Ascending aorta (tissue), 2 donors: ENCODE measurements at regions of chr10 and their contacts with region 1.

Region 1: GRCh38 chr10:29590915-29591650 is 43.7 kb downstream of the SVIL start:
- DNase-seq: no peak
- H3K4me3 ChIP-seq: no peak overlapping the region
- H3K27ac ChIP-seq: peak overlapping the region; percentile 24 to 74
- H3K4me1 ChIP-seq: peaks cover 9 to 49% of the 10 kb centered on the region in 2 donors
- H3K27me3 ChIP-seq: no peaks in the 10 kb centered on the region
- CTCF ChIP-seq: no peak

Region 2: DNA sequence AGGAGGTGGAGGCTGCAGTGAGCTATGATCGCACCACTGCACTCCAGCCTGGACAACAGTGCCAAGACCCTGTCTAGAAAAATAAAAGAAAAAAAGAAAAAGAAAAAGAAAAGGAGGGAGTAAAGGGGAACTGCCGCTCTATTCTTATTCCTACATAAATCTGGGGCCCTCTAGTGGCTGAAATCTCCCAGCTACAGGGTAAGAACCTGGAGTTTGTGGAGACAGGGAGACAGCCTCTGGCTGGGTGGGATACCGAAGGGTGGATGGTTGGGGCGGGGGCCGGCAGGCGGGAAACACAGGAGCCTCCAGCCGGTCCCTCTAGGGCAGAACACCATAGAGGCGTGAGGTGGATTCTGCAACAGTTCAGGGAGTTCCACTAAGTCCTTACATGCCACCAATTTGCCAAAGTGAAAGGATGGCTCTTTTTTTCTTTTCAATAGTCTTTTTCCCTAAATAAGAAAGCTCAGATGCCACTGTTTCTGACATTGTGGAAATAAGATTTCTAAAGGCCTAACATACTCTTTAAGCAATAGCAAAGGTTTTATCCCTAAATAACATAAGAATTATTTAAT is 73.6 kb before region 1 on chr10:
- intact Hi-C with region 1: loop called (anchors 5 kb)
- DNase-seq: no peak
- H3K4me3 ChIP-seq: no peak overlapping the region
- H3K27ac ChIP-seq: peak overlapping the region; percentile 66 to 72
- H3K4me1 ChIP-seq: peaks cover 0 to 20% of the 10 kb centered on the region in 2 donors
- H3K27me3 ChIP-seq: no peaks in the 10 kb centered on the region
- CTCF ChIP-seq: peak in 2 of 3 experiments; percentile 47 to 54

Region 3: GRCh38 chr10:29535012-29535777 is 55.9 kb before region 1 on chr10:
- intact Hi-C with region 1: loop called (anchors 5 kb)
- DNase-seq: no peak
- H3K4me3 ChIP-seq: peak overlapping the region; percentile 3 to 32
- H3K27ac ChIP-seq: peak overlapping the region; percentile 71 to 73
- H3K4me1 ChIP-seq: peaks cover 3 to 42% of the 10 kb centered on the region in 2 donors
- H3K27me3 ChIP-seq: no peaks in the 10 kb centered on the region
- CTCF ChIP-seq: peak; percentile 38 to 73 (median 66)

Region 4: GRCh38 chr10:29555746-29556481 is 35.2 kb before region 1 on chr10:
- intact Hi-C with region 1: loop called (anchors 2 kb)
- DNase-seq: peak in 1 of 2 donors; percentile 75
- H3K4me3 ChIP-seq: no peak overlapping the region
- H3K27ac ChIP-seq: peak overlapping the region; percentile 69 to 75
- H3K4me1 ChIP-seq: peaks cover 8 to 29% of the 10 kb centered on the region in 2 donors
- H3K27me3 ChIP-seq: no peaks in the 10 kb centered on the region
- CTCF ChIP-seq: no peak

Region 5: GRCh38 chr10:29621161-29621560 is 30.1 kb after region 1 on chr10:
- intact Hi-C with region 1: loop called (anchors 2 kb)
- DNase-seq: peak; percentile 32 to 87
- H3K4me3 ChIP-seq: peak overlapping the region in 1 of 2 donors; percentile 7
- H3K27ac ChIP-seq: peak overlapping the region; percentile 65 to 79
- H3K4me1 ChIP-seq: peaks cover 2 to 62% of the 10 kb centered on the region in 2 donors
- H3K27me3 ChIP-seq: no peaks in the 10 kb centered on the region
- CTCF ChIP-seq: no peak